HepG2 (cell line): ENCODE measurements at regions of chr17 and their contacts with region 1.

Region 1: GRCh38 chr17:56819431-56820145 is 14.1 kb downstream of the C17orf67 start:
- DNase-seq: peak; percentile 89
- ATAC-seq: peak; percentile 93
- H3K4me3 ChIP-seq: peak overlapping the region in 2 of 3 experiments; percentile 18 to 30; a peak in 2 of 6 replicates
- H3K27ac ChIP-seq: no peak overlapping the region
- H3K4me1 ChIP-seq: peaks cover 21% of the 10 kb centered on the region
- H3K27me3 ChIP-seq: peaks cover 0 to 15% of the 10 kb centered on the region in 2 experiments; a peak in 4 of 5 replicates
- CTCF ChIP-seq: peak; percentile 95
- EP300 ChIP-seq: no peak
- POLR2A ChIP-seq: no peak
- RAD21 ChIP-seq: peak; percentile 83

Region 2: DNA sequence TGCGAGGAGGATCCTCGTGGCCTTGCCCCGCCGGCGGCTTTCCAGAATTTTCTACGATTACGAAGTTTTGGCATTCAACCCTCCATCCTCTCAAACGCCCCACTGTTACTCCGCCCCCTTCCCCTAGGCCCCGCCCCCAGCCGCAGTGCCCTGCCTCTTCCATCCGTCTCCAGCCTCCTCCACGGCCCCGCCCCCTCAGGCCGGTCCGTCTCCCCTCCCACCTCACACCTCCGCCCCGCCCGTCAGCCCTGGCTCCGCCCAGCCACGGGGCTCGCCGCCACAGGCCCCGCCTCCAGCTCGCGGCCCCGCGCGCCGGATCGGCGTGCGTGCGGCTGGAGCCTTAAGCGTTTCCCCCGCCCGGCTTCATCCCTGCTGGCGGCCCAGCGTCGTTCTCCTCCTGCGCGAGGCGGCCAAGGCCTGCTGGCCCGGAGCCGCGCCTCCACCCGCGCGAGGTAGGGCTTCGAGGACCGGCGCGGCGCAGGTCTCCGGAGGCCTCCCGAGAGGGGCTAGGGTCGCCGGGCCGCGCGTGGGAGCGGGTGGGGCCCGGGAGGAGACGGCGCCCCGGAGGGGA is 14.3 kb after region 1 on chr17 and contains the starts of genes C17orf67 and DGKE:
- CTCF ChIA-PET with region 1: no interaction called
- POLR2A ChIA-PET with region 1: interaction called, 4 read pairs
- in situ Hi-C with region 1: no loop called
- intact Hi-C with region 1: loop called (anchors 2 kb)
- DNase-seq: peak; percentile 86
- ATAC-seq: peak; percentile 85
- H3K4me3 ChIP-seq: peak within 1 kb of the TSS; percentile 69 to 86 (median 75)
- H3K27ac ChIP-seq: peak within 1 kb of the TSS; percentile 50
- H3K4me1 ChIP-seq: peaks cover 54% of the 10 kb centered on the region
- H3K27me3 ChIP-seq: no peaks in the 10 kb centered on the region; a peak in 1 of 5 replicates
- CTCF ChIP-seq: no peak; the same call in 1 of the 2 replicates
- EP300 ChIP-seq: no peak
- POLR2A ChIP-seq: peak; percentile 27 to 66; a peak in 3 of 4 replicates
- RAD21 ChIP-seq: no peak
- total RNA-seq, gene C17orf67: 0.62 and 0.86 TPM in 2 replicates
- total RNA-seq, gene DGKE: 3.2 and 5.3 TPM in 2 replicates

Region 3: DNA sequence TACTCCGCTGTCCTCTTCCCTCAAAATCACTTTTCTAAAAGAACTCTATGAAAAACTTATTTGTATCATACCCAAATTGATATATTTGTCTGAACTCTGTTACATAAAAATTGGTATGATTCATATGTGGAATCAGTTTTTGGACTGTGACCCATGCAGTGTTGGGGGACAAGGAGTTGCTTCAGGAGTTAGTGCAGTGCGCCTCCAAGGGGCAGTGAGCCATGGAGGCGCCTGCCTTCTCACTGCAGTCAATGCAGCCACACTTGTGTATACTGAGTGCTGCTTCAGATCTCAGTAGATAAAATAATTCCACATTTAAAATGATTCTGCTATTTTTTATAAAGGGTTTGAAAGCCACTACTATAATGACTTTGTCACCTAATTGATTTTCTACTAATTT is 46.9 kb after region 1 on chr17:
- CTCF ChIA-PET with region 1: interaction called, 6 read pairs
- POLR2A ChIA-PET with region 1: no interaction called
- in situ Hi-C with region 1: no loop called
- intact Hi-C with region 1: loop called (anchors 1 kb)
- DNase-seq: no peak
- ATAC-seq: peak; percentile 87
- H3K4me3 ChIP-seq: no peak overlapping the region
- H3K27ac ChIP-seq: no peak overlapping the region
- H3K4me1 ChIP-seq: peaks cover 12% of the 10 kb centered on the region
- H3K27me3 ChIP-seq: no peaks in the 10 kb centered on the region
- CTCF ChIP-seq: peak; percentile 59
- EP300 ChIP-seq: no peak
- POLR2A ChIP-seq: no peak
- RAD21 ChIP-seq: no peak

Region 4: DNA sequence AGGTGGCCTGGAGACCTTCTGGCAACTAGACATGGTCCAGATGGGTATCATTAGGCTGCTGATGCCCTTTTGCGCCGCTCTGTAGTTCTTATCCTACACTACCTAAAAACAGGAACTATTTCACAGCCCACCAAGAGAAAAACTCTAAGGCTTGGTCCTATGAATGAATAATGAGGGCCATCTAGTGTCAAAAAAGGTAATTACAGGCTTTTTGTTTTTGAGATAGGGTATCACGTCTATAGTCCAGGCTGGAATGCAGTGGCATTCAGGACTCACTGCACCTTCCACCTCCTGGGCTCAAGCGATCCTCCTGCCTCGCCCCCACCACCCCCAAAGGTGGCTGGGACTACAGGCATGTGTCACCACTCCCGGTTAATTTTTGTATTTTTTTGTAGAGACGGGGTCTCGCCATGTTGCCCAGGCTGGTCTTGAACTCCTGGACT is 120.3 kb after region 1 on chr17:
- CTCF ChIA-PET with region 1: interaction called, 45 read pairs
- POLR2A ChIA-PET with region 1: interaction called, 3 read pairs
- in situ Hi-C with region 1: loop called (anchors 5 kb)
- intact Hi-C with region 1: loop called (anchors 1 kb)
- DNase-seq: peak; percentile 72
- ATAC-seq: peak; percentile 90
- H3K4me3 ChIP-seq: no peak overlapping the region
- H3K27ac ChIP-seq: no peak overlapping the region
- H3K4me1 ChIP-seq: peaks cover 19% of the 10 kb centered on the region
- H3K27me3 ChIP-seq: no peaks in the 10 kb centered on the region
- CTCF ChIP-seq: peak; percentile 89
- EP300 ChIP-seq: no peak
- POLR2A ChIP-seq: no peak
- RAD21 ChIP-seq: peak; percentile 80

Region 5: DNA sequence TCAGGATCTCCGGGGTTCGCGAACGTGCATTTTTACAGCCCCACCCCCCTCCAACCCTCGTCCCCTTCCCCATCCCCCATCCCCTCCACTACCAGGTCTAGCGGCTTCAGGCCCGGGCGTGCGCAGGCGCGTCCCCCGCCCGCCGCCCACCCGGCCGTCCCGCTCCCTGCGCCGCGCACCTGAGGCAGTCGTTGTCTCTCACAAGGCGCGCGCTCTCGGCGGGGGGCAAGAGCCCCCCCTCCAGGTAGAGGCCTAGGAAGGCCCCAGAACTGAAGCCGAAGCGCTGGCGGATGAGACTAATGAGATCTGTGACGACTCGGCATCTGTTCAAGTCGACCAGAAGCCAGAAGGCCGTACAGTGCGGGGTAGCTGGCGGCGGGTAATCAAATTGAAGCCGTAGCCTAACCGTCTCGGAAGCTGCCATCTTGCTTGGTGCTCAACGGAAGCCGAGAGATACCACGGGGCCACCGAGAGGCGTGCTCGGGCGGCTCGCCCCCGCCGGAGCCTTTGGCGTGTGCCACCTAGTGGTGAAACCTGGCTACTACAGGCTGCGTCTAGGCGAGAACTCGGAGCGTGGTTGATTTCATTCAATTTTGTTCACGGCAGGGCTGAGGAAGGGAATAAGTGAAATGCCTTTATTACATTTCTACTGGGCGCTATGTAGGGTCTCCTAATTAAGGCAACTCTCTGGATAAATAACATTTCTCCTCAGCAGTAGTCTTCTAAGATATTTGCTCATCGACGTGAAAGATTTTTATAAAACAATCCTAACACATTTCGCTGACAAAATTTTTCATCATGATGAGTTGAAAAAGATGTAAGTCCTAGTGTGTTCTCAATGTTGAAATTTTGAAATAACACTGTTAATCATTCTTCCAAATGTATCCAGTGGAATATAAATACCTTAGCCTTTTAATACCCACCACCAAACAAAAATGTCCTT is 141.3 kb after region 1 on chr17 and contains the start of gene COIL:
- CTCF ChIA-PET with region 1: interaction called, 11 read pairs
- POLR2A ChIA-PET with region 1: no interaction called
- in situ Hi-C with region 1: no loop called
- intact Hi-C with region 1: no loop called
- DNase-seq: peak; percentile 92
- ATAC-seq: peak; percentile 99
- H3K4me3 ChIP-seq: peak within 1 kb of the TSS; percentile 72 to 92 (median 82)
- H3K27ac ChIP-seq: peak within 1 kb of the TSS; percentile 93
- H3K4me1 ChIP-seq: peaks cover 55% of the 10 kb centered on the region
- H3K27me3 ChIP-seq: no peaks in the 10 kb centered on the region
- CTCF ChIP-seq: peak; percentile 98
- EP300 ChIP-seq: no peak
- POLR2A ChIP-seq: peak; percentile 78 to 94
- RAD21 ChIP-seq: peak; percentile 86
- total RNA-seq, gene COIL: 29.4 and 39.0 TPM in 2 replicates

Region 6: DNA sequence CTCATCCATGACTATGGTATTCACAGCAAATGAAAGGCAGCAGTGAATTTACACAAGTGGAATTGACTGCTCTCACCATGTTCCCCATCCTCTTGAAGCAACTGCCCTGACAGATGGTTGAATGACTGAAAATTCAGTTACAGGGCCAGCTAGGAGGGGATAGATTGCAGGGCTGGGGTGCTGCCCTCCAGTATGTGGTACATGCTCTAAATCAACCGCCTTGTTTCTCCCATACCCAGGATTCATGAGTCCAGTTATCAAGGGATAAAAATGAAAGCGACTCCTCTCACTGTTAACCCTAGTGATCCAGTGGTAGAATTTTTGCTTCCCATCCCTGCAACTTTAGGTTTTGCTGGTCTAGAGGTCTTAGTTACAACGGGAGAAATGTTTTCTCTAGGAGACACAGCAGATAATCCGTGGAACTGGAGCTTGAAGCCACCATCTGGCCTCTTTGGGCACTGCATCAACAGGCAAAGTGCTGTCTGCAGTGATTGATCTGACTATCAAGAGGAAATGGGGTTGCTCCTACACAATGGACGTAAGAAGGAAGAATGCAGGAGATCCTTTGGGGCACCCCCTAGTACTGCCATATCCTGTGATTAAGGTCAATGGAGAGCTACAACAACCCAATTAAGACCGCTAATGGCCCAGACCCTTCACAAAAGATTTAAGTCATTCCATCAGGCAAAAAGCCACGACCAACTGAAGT is 190.3 kb after region 1 on chr17:
- CTCF ChIA-PET with region 1: no interaction called
- POLR2A ChIA-PET with region 1: no interaction called
- in situ Hi-C with region 1: no loop called
- intact Hi-C with region 1: loop called (anchors 1 kb)
- DNase-seq: peak; percentile 43
- ATAC-seq: peak; percentile 96
- H3K4me3 ChIP-seq: no peak overlapping the region
- H3K27ac ChIP-seq: no peak overlapping the region
- H3K4me1 ChIP-seq: no peaks in the 10 kb centered on the region
- H3K27me3 ChIP-seq: no peaks in the 10 kb centered on the region
- CTCF ChIP-seq: peak; percentile 80
- EP300 ChIP-seq: no peak
- POLR2A ChIP-seq: no peak
- RAD21 ChIP-seq: no peak; the same call in 1 of the 2 replicates

Region 7: DNA sequence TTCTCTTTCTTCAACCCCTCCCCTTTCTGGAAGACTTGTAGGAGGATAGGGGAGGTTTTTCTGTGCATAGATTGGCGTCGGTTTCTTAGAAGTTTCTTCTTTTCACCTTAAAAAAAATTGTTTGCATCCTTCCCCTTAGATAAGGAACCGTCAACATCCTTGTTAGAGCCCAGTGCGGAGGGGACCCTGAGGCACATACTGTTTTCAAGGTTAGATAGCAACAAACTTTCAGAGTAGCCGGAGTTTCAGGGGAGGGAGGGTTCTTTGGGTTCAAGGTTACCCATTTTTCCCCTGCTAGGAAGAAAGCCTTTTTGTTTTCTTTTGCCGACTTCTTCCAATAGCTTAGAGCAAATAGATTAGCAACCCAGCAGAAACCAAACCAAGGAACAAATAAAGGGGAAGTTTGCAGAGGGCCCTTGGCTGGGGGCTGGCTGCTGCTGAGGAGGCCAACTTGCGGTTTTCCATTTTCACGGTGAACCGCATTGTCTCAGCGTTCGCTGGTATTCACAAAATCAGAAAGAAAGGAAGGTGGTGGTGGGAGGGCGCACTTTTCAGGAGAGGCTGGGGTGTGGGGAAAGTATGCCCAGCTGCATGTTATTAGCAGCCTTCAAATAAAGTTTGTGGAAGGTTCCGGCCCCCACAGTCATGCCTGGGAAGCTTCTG is 465.5 kb after region 1 on chr17:
- CTCF ChIA-PET with region 1: no interaction called
- POLR2A ChIA-PET with region 1: no interaction called
- in situ Hi-C with region 1: no loop called
- intact Hi-C with region 1: no loop called
- DNase-seq: peak; percentile 65
- ATAC-seq: peak; percentile 49
- H3K4me3 ChIP-seq: peak overlapping the region in 1 of 3 experiments; percentile 30; a peak in 1 of 6 replicates
- H3K27ac ChIP-seq: peak overlapping the region; percentile 54
- H3K4me1 ChIP-seq: peaks cover 58% of the 10 kb centered on the region
- H3K27me3 ChIP-seq: no peaks in the 10 kb centered on the region
- CTCF ChIP-seq: no peak
- EP300 ChIP-seq: peak in 1 of 2 experiments; percentile 78; a peak in 2 of 4 replicates
- POLR2A ChIP-seq: no peak
- RAD21 ChIP-seq: no peak